Heart right ventricle (tissue), 16 donors: ENCODE measurements at regions of chr1 and their contacts with region 1.

Region 1: DNA sequence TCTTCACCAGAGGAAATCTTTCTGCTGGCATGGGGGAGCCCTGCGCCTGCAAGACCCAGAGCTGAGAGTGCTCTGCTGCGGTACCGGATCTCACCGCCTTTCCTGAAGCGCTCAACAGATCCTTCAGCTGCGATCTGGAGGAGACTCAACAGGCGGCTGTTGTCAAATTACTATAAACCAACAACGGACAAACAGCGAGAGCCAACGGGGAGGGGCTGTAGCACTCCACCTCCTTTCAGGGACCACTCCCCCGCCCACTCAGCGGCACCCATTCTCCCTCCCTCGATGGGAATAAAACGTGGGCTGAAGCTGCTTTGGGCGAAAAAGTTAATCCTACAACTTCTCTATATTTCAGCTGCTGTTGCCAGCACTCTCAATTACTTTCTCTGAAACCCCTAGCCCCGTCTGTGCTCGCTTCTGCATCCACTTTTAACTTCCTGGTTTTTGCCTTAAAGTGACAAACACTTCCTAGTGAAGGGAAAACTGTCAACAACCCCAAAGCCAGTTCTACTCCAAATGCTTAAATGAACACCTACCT is at the start of gene FMO5:
- DNase-seq: peak; percentile 62 to 64
- ATAC-seq: peak; percentile 85 to 95 (median 92)
- H3K4me3 ChIP-seq: peak within 1 kb of the TSS; percentile 2 to 78 (median 63)
- H3K27ac ChIP-seq: peak within 1 kb of the TSS; percentile 32 to 88 (median 66)
- H3K4me1 ChIP-seq: peaks cover 0 to 15% (median 5%) of the 10 kb centered on the region in 9 donors
- H3K27me3 ChIP-seq: no peaks in the 10 kb centered on the region
- CTCF ChIP-seq: peak in 3 of 9 donors; percentile 18 to 22 (median 21)
- total RNA-seq, gene FMO5: 0.20 to 21.7 (median 0.78) TPM

Region 2: GRCh38 chr1:147172168-147172992 is 52.9 kb before region 1 on chr1 and contains the start of gene PRKAB2:
- intact Hi-C with region 1: loop called in 2 of 10 experiments (anchors 5 kb)
- DNase-seq: peak; percentile 96
- ATAC-seq: peak; percentile 95 to 99 (median 97)
- H3K4me3 ChIP-seq: peak within 1 kb of the TSS; percentile 58 to 99 (median 90)
- H3K27ac ChIP-seq: peak within 1 kb of the TSS; percentile 74 to 98 (median 94)
- H3K4me1 ChIP-seq: peaks cover 3 to 60% (median 47%) of the 10 kb centered on the region in 9 donors
- H3K27me3 ChIP-seq: no peaks in the 10 kb centered on the region
- CTCF ChIP-seq: peak; percentile 84 to 100 (median 96)
- total RNA-seq, gene PRKAB2: 23.2 to 40.2 (median 34.9) TPM

Region 3: DNA sequence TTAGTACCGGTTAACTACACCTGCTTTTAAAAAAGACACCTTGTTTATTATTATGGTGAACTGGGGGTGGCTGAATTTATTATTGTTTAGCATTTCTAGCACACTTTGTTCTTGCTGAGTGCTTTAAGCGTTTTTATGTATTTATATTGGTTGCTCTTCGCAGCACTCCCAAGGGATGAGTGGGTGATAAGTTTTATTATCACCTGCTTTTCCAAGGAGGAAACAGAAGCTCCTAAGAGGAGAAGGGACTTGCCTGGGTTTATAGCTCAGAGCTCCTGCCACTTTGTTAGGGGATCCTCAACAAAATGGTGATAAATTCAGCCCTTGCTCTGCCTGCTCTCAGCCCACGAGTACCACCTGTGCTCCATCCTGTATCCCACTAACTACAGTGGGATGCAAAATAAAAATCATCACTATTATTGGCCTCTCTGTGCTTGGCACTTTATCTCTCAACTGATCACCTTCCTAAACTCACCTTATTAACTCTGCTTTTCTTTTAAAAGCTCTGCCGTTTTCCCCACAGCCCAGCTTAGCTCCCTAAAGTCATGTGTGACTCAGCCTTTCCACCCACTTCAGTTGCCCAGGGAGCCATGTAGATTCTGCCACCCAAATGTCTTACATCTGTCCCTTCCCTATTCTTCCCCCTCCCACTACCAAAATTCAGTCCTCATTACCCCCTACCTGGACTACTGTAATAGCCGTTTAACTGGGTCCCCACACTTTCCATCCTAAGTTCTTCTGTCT is 360.6 kb after region 1 on chr1:
- intact Hi-C with region 1: no loop called
- DNase-seq: no peak
- ATAC-seq: no peak
- H3K4me3 ChIP-seq: no peak overlapping the region
- H3K27ac ChIP-seq: no peak overlapping the region
- H3K4me1 ChIP-seq: peaks cover 0 to 22% (median 4%) of the 10 kb centered on the region in 9 donors
- H3K27me3 ChIP-seq: peaks cover 0 to 67% (median 0%) of the 10 kb centered on the region in 7 donors
- CTCF ChIP-seq: no peak

Region 4: DNA sequence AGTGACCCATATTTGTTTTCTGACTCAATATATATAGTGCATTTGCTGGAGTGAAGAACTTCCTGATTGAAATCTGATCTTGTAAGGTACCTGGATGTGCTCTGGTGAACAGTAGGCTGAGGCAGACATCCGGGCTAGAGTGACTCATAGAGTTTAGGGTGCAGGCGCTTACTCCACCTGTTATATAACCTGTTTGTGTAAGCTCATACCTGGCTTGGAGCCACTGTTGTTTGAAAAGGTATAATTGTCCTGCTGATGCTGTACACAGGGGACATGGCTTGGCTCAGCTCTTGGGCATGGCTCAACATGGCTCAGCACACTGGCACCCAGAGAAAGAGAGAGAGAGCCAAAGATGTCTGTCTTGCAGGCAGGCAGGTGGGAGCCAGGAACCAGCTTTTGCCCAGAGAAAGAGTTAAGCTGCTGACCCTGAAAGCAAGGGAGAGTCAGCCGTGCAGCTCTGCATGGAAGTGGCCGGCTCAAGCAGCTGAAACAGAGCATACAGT is 491.9 kb after region 1 on chr1:
- intact Hi-C with region 1: no loop called
- DNase-seq: no peak
- ATAC-seq: no peak
- H3K4me3 ChIP-seq: no peak overlapping the region
- H3K27ac ChIP-seq: no peak overlapping the region
- H3K4me1 ChIP-seq: peaks cover 0 to 12% (median 5%) of the 10 kb centered on the region in 9 donors
- H3K27me3 ChIP-seq: peaks cover 0 to 10% (median 0%) of the 10 kb centered on the region in 7 donors
- CTCF ChIP-seq: no peak